ENCODE measurements at regions of chr10 and their contacts with region 1.

Region 1: GRCh38 chr10:88687853-88688467 is 18.1 kb upstream of the LIPK start:
- DNase-seq: peak in 4 of 5 donors; percentile 18 to 26 (median 21)
- H3K4me3 ChIP-seq: no peak overlapping the region
- H3K4me3 Mint-ChIP-seq: no peak overlapping the region
- H3K27ac ChIP-seq: no peak overlapping the region
- H3K27ac Mint-ChIP-seq: no peak overlapping the region
- H3K4me1 ChIP-seq: no peaks in the 10 kb centered on the region
- H3K4me1 Mint-ChIP-seq: no peaks in the 10 kb centered on the region
- H3K27me3 ChIP-seq: no peaks in the 10 kb centered on the region
- H3K27me3 Mint-ChIP-seq: peaks cover 0 to 2% of the 10 kb centered on the region in 2 donors

Region 2: GRCh38 chr10:88598055-88598454 is 89.9 kb before region 1 on chr10:
- CTCF ChIA-PET with region 1: no interaction called
- POLR2A ChIA-PET with region 1: no interaction called
- intact Hi-C with region 1: no loop called
- DNase-seq: no peak
- H3K4me3 ChIP-seq: no peak overlapping the region
- H3K4me3 Mint-ChIP-seq: no peak overlapping the region
- H3K27ac ChIP-seq: no peak overlapping the region
- H3K27ac Mint-ChIP-seq: no peak overlapping the region
- H3K4me1 ChIP-seq: no peaks in the 10 kb centered on the region
- H3K4me1 Mint-ChIP-seq: no peaks in the 10 kb centered on the region
- H3K27me3 ChIP-seq: no peaks in the 10 kb centered on the region
- H3K27me3 Mint-ChIP-seq: peaks cover 0 to 4% of the 10 kb centered on the region in 2 donors

Region 3: DNA sequence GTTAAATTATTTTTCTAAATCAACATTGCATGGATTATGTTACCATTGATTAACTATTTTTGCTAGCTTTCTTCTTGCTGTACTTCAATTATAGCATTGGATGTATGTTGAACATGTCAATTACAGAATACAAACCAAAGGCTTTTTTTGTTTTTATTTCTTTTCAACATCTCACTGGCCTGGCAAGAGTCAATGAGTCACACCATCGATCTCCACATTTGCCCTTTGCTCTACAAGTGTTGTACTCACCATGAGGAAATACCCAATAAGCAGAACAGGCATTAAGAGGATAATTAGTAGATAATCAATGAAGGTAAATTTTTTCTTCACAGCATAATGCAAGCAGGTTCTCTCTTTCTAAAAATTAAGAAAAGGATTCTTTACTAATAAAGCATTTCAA is 140.3 kb after region 1 on chr10:
- CTCF ChIA-PET with region 1: no interaction called
- POLR2A ChIA-PET with region 1: no interaction called
- intact Hi-C with region 1: no loop called
- DNase-seq: no peak
- H3K4me3 ChIP-seq: no peak overlapping the region
- H3K4me3 Mint-ChIP-seq: no peak overlapping the region
- H3K27ac ChIP-seq: no peak overlapping the region
- H3K27ac Mint-ChIP-seq: no peak overlapping the region
- H3K4me1 ChIP-seq: peaks cover 67% of the 10 kb centered on the region
- H3K4me1 Mint-ChIP-seq: peaks cover 46 to 80% (median 67%) of the 10 kb centered on the region in 4 donors
- H3K27me3 ChIP-seq: no peaks in the 10 kb centered on the region
- H3K27me3 Mint-ChIP-seq: no peaks in the 10 kb centered on the region

Region 4: GRCh38 chr10:88843171-88843570 is 155.2 kb after region 1 on chr10:
- CTCF ChIA-PET with region 1: no interaction called
- POLR2A ChIA-PET with region 1: no interaction called
- intact Hi-C with region 1: no loop called
- DNase-seq: no peak
- H3K4me3 ChIP-seq: no peak overlapping the region
- H3K4me3 Mint-ChIP-seq: no peak overlapping the region
- H3K27ac ChIP-seq: no peak overlapping the region
- H3K27ac Mint-ChIP-seq: no peak overlapping the region
- H3K4me1 ChIP-seq: no peaks in the 10 kb centered on the region
- H3K4me1 Mint-ChIP-seq: no peaks in the 10 kb centered on the region
- H3K27me3 ChIP-seq: no peaks in the 10 kb centered on the region
- H3K27me3 Mint-ChIP-seq: peaks cover 5 to 6% of the 10 kb centered on the region in 2 donors

Region 5: GRCh38 chr10:88865281-88865876 is 177.4 kb after region 1 on chr10:
- CTCF ChIA-PET with region 1: no interaction called
- POLR2A ChIA-PET with region 1: no interaction called
- intact Hi-C with region 1: loop called (anchors 1 kb)
- DNase-seq: no peak
- H3K4me3 ChIP-seq: no peak overlapping the region
- H3K4me3 Mint-ChIP-seq: no peak overlapping the region
- H3K27ac ChIP-seq: no peak overlapping the region
- H3K27ac Mint-ChIP-seq: no peak overlapping the region
- H3K4me1 ChIP-seq: no peaks in the 10 kb centered on the region
- H3K4me1 Mint-ChIP-seq: no peaks in the 10 kb centered on the region
- H3K27me3 ChIP-seq: no peaks in the 10 kb centered on the region
- H3K27me3 Mint-ChIP-seq: peaks cover 2 to 3% of the 10 kb centered on the region in 2 donors